B cell (primary cell): ENCODE measurements at regions of chr19 and their contacts with region 1.

Region 1: GRCh38 chr19:35931161-35931873 is 4.9 kb upstream of the LRFN3 start:
- DNase-seq: peak; percentile 100
- ATAC-seq: peak; percentile 92
- H3K4me3 ChIP-seq: peak overlapping the region in 4 of 5 experiments; percentile 32 to 63 (median 51)
- H3K4me3 Mint-ChIP-seq: peak overlapping the region; percentile 77
- H3K27ac ChIP-seq: peak overlapping the region; percentile 81 to 86
- H3K27ac Mint-ChIP-seq: peak overlapping the region; percentile 86
- H3K4me1 ChIP-seq: peaks cover 40 to 55% of the 10 kb centered on the region in 2 donors
- H3K4me1 Mint-ChIP-seq: peaks cover 46% of the 10 kb centered on the region
- H3K27me3 ChIP-seq: peaks cover 0 to 9% (median 3%) of the 10 kb centered on the region in 4 experiments
- H3K27me3 Mint-ChIP-seq: peaks cover 5% of the 10 kb centered on the region
- CTCF ChIP-seq: peak; percentile 84

Region 2: DNA sequence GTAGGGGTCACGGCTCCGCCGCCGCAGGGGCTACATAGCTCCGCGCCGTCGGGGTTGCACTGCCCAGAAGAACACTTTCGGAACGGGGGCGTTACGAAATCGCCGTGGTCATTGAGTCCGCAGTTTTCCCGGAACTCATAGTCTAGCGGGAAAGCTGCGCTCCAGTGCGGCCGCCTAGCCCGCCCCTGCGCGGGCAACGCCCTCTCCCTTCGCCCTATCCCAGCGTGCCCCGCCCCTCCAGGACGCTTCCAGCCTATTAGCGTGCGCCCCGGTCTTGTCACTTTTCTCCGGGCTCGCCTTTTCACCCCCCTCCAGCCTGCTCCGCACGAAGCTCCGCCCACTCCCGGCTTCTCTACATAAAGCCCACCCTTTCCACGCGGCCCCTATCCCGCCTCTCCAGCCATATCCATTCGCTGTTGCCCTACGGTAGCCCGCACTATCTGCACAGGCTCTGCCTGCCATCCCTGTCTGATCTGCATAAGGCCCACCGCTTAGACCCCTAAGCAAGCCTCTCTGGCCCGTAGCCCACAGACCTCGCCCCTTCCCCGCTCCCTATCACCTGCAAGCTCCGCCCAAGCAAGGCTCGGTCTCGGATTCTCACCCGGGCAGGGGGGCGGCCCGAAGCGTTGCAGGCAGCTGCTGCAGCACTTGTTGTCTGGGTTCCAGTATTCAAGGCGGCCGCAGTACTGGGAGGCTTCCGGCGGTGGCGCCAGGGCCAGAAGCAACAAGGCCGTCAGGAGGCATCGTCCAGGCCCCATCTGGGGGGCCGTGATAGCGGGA is 190.7 kb before region 1 on chr19:
- CTCF ChIA-PET with region 1: no interaction called
- POLR2A ChIA-PET with region 1: no interaction called
- intact Hi-C with region 1: loop called (anchors 1 kb)
- DNase-seq: peak; percentile 95
- ATAC-seq: peak; percentile 64
- H3K4me3 ChIP-seq: peak overlapping the region; percentile 60 to 93 (median 83)
- H3K4me3 Mint-ChIP-seq: peak overlapping the region; percentile 96
- H3K27ac ChIP-seq: peak overlapping the region; percentile 59 to 73
- H3K27ac Mint-ChIP-seq: peak overlapping the region; percentile 92
- H3K4me1 ChIP-seq: peaks cover 34 to 64% of the 10 kb centered on the region in 2 donors
- H3K4me1 Mint-ChIP-seq: peaks cover 57% of the 10 kb centered on the region
- H3K27me3 ChIP-seq: no peaks in the 10 kb centered on the region
- H3K27me3 Mint-ChIP-seq: no peaks in the 10 kb centered on the region
- CTCF ChIP-seq: no peak

Region 3: GRCh38 chr19:35757749-35758608 is 173.3 kb before region 1 on chr19 and contains the start of gene PROSER3:
- CTCF ChIA-PET with region 1: no interaction called
- POLR2A ChIA-PET with region 1: no interaction called
- intact Hi-C with region 1: loop called (anchors 1 kb)
- DNase-seq: peak; percentile 99
- ATAC-seq: peak; percentile 95
- H3K4me3 ChIP-seq: peak within 1 kb of the TSS; percentile 85 to 99 (median 94)
- H3K4me3 Mint-ChIP-seq: peak within 1 kb of the TSS; percentile 99
- H3K27ac ChIP-seq: peak within 1 kb of the TSS; percentile 91 to 96
- H3K27ac Mint-ChIP-seq: peak within 1 kb of the TSS; percentile 99
- H3K4me1 ChIP-seq: peaks cover 24 to 35% of the 10 kb centered on the region in 2 donors
- H3K4me1 Mint-ChIP-seq: peaks cover 34% of the 10 kb centered on the region
- H3K27me3 ChIP-seq: peaks cover 0 to 26% (median 10%) of the 10 kb centered on the region in 4 experiments
- H3K27me3 Mint-ChIP-seq: peaks cover 17% of the 10 kb centered on the region
- CTCF ChIP-seq: no peak
- total RNA-seq, gene PROSER3: 61.0 and 65.6 TPM in 2 replicates

Region 4: DNA sequence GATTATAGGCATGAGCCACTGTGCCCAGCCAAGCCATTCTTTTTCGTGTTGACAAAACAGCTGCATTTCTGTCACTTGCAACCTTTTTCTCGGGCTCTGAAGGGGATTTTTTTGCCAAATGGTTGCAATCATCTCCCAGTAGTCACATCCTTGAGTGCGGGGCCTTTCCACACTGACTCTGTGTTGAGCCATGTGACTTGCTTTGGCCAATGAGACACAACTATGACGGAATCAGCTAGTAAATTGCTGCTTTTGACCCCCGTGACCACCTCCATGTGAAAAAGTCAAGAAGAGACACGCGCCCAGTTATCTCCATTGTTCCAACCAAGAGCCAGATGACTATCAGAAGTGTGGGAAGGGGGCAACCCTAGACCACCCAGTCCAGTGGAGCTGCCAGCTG is 97.3 kb before region 1 on chr19:
- CTCF ChIA-PET with region 1: no interaction called
- POLR2A ChIA-PET with region 1: no interaction called
- intact Hi-C with region 1: no loop called
- DNase-seq: no peak
- ATAC-seq: no peak
- H3K4me3 ChIP-seq: no peak overlapping the region
- H3K4me3 Mint-ChIP-seq: no peak overlapping the region
- H3K27ac ChIP-seq: no peak overlapping the region
- H3K27ac Mint-ChIP-seq: no peak overlapping the region
- H3K4me1 ChIP-seq: no peaks in the 10 kb centered on the region
- H3K4me1 Mint-ChIP-seq: no peaks in the 10 kb centered on the region
- H3K27me3 ChIP-seq: peaks cover 0 to 12% (median 0%) of the 10 kb centered on the region in 4 experiments
- H3K27me3 Mint-ChIP-seq: peaks cover 30% of the 10 kb centered on the region
- CTCF ChIP-seq: no peak

Region 5: DNA sequence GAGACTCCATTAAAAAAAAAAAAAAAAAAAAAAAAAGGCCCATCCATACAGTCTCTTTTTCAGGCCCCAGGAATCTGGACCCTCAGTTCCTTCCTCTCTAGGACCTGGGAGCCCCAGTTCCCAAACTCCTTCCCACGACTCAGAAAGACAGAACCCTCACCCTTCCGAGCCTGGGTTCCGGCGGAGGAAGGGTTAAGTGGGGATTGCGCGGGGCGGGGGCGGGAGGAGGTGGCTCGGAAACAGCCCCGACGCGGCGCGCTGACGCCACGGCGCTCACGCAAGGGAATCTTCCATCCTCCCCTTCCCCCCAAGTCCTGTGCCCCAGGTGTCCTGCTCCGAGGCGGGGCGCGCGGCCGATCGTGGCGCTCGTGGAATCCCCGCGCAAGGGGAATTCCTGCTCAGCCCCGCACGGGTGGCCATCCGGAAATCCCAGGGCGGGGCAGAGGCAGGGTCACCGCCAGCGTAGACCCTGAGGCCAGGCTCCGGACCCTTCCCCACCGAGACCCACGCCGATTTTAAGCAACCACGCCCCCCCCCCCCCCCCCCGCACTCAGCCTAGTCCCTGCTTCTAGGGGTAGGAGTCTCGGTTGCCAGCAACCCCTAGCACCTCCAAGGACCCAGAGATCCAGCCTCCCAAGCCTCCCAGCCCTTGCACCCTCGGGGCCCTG is 31.6 kb before region 1 on chr19:
- CTCF ChIA-PET with region 1: interaction called, 11 read pairs
- POLR2A ChIA-PET with region 1: interaction called, 34 read pairs
- intact Hi-C with region 1: loop called (anchors 1 kb)
- DNase-seq: peak; percentile 98
- ATAC-seq: peak; percentile 57
- H3K4me3 ChIP-seq: peak overlapping the region; percentile 74 to 100 (median 91)
- H3K4me3 Mint-ChIP-seq: peak overlapping the region; percentile 94
- H3K27ac ChIP-seq: peak overlapping the region; percentile 100
- H3K27ac Mint-ChIP-seq: peak overlapping the region; percentile 98
- H3K4me1 ChIP-seq: peaks cover 53 to 69% of the 10 kb centered on the region in 2 donors
- H3K4me1 Mint-ChIP-seq: peaks cover 64% of the 10 kb centered on the region
- H3K27me3 ChIP-seq: no peaks in the 10 kb centered on the region
- H3K27me3 Mint-ChIP-seq: no peaks in the 10 kb centered on the region
- CTCF ChIP-seq: no peak

Region 6: DNA sequence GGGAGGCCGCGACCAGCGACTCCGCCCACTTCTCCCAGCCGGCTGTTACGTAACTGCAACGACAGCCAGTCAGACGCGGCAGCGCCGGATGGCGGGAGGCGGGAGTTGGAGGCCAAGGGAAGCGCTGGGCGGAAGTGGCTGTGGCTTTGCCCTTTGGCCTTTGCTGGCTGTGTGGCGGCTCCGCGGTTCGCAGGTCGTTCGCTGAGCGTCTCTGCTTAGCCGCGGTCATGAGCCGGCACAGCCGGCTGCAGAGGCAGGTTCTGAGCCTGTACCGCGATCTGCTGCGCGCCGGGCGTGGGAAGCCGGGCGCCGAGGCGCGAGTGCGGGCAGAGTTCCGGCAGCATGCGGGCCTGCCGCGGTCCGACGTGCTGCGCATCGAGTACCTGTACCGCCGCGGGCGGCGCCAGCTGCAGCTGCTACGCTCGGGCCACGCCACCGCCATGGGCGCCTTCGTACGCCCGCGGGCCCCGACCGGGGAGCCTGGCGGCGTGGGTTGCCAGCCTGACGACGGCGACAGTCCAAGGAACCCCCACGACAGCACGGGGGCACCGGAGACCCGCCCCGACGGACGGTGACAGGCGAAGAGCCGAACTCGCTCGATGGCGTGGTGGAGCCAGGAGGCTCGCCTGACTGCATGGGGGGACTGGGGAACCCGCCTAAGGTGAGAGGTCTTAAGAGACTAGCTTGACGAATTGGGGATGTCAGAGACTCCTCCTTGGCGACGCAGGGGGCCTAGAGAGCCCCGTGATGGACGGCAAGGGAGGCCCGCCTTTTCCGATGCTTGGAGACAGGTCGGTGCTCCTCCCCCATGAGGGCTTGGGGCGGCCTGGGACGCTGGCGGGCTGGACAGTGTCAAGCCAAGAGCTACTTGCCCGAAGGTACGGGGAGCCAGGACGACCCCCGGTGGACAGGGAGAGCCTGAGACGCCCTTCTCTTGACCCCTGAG is 64.0 kb after region 1 on chr19 and contains the start of gene SDHAF1:
- CTCF ChIA-PET with region 1: no interaction called
- POLR2A ChIA-PET with region 1: no interaction called
- intact Hi-C with region 1: loop called (anchors 1 kb)
- DNase-seq: peak; percentile 93
- ATAC-seq: peak; percentile 96
- H3K4me3 ChIP-seq: peak within 1 kb of the TSS; percentile 60 to 79 (median 77)
- H3K4me3 Mint-ChIP-seq: peak within 1 kb of the TSS; percentile 97
- H3K27ac ChIP-seq: peak within 1 kb of the TSS; percentile 55 to 81
- H3K27ac Mint-ChIP-seq: peak within 1 kb of the TSS; percentile 96
- H3K4me1 ChIP-seq: peaks cover 18 to 25% of the 10 kb centered on the region in 2 donors
- H3K4me1 Mint-ChIP-seq: peaks cover 32% of the 10 kb centered on the region
- H3K27me3 ChIP-seq: no peaks in the 10 kb centered on the region
- H3K27me3 Mint-ChIP-seq: no peaks in the 10 kb centered on the region
- CTCF ChIP-seq: no peak
- total RNA-seq, gene SDHAF1: 24.2 and 24.6 TPM in 2 replicates

Region 7: GRCh38 chr19:36064826-36065225 is 133.5 kb after region 1 on chr19:
- CTCF ChIA-PET with region 1: no interaction called
- POLR2A ChIA-PET with region 1: no interaction called
- intact Hi-C with region 1: no loop called
- DNase-seq: no peak
- ATAC-seq: no peak
- H3K4me3 ChIP-seq: no peak overlapping the region
- H3K4me3 Mint-ChIP-seq: no peak overlapping the region
- H3K27ac ChIP-seq: no peak overlapping the region
- H3K27ac Mint-ChIP-seq: no peak overlapping the region
- H3K4me1 ChIP-seq: no peaks in the 10 kb centered on the region
- H3K4me1 Mint-ChIP-seq: no peaks in the 10 kb centered on the region
- H3K27me3 ChIP-seq: no peaks in the 10 kb centered on the region
- H3K27me3 Mint-ChIP-seq: no peaks in the 10 kb centered on the region
- CTCF ChIP-seq: no peak